ENCODE measurements at regions of chr17 and their contacts with region 1.

Region 1: DNA sequence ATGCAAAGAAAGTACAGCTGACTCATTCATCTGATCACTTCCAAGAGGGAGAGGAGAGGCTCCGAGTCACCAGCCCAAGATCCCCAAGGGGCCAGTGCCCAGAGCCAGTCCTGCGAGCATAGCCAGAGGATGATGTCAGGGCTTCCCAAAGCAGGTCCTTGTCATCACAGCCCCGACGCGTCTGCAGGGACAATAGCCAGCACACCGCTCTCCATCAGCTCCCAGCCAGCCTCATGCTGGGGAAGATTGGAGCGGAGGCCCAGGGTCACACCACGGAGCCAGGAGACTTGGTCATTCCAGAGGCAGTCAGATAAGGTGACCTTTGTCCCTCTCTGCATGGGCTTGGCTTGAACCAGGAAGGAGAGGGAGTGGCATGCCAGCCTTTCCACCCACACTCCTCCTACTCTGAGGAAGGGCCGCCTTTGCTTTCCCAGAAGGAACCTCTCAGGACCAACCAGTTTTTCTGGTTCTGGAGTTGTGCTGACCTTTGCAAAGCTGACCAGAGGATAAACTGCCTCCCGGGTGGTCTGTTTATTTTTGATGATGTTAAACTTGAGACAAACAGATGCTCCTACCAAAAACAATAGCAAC is 58.3 kb upstream of the ARHGAP44 start:
- DNase-seq: peak; percentile 85 to 96 (median 85)
- ATAC-seq: peak; percentile 83 to 87 (median 84)
- H3K4me3 ChIP-seq: peak overlapping the region in 2 of 12 donors; percentile 1 to 10
- H3K27ac ChIP-seq: peak overlapping the region; percentile 37 to 93 (median 82)
- H3K4me1 ChIP-seq: peaks cover 0 to 63% (median 17%) of the 10 kb centered on the region in 12 donors
- H3K27me3 ChIP-seq: no peaks in the 10 kb centered on the region
- CTCF ChIP-seq: no peak
- POLR2A ChIP-seq: no peak

Region 2: DNA sequence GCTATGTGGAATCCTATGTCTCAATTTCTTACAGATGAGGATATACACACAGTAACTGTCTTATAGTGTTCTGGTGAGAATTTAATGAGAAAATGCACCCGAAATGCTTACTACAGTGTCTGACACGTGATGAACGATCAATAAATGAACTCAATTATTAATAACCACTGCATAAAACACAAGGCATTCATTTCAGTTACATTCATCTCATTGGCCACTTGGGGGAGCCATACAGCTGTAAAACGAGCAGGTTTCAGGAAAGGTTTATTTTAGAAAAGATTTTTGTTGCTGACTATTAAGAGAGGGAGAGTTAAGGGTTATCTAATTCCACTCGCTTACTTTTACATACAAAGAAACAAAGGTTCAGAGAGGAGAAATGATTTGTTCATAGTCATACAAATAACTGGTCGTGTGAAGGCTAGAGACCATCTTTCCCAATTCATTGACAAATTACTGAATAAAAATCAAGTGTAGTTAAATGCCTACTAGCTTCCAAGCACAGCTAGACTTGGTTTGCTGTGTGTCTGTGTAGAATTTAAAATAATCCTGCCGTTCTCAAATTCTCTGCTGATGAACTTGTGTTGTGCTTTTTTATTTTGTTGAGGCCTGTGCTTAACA is 550.3 kb before region 1 on chr17:
- intact Hi-C with region 1: loop called in 1 of 10 experiments (anchors 5 kb)
- DNase-seq: peak in 1 of 5 donors; percentile 10
- ATAC-seq: peak in 2 of 4 donors; percentile 42 to 63
- H3K4me3 ChIP-seq: no peak overlapping the region
- H3K27ac ChIP-seq: no peak overlapping the region
- H3K4me1 ChIP-seq: peaks cover 0 to 7% (median 0%) of the 10 kb centered on the region in 12 donors
- H3K27me3 ChIP-seq: no peaks in the 10 kb centered on the region
- CTCF ChIP-seq: peak; percentile 51 to 79 (median 68)
- POLR2A ChIP-seq: no peak

Region 3: DNA sequence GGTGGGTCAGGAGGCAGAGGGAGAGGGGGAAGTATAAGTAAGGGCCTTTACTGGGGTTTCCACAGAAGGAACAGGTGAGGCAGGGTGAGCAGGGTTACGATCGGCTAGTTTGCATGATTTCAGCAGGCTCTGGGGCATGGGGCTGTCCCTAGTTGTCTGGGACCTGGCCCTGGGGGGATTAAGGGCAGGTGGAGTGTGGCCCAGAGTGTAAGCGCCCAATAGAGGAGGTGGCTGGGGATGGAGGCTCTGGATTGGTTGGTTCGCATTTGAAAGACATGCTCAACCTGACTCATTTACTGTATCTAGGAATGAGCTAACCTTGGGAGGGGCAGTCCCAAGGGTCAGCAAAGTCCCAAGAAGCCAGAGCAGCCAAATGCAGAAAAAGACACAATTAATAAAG is 480.1 kb before region 1 on chr17:
- intact Hi-C with region 1: loop called in 3 of 10 experiments (anchors 5 to 10 kb)
- DNase-seq: no peak
- ATAC-seq: no peak
- H3K4me3 ChIP-seq: no peak overlapping the region
- H3K27ac ChIP-seq: no peak overlapping the region
- H3K4me1 ChIP-seq: peaks cover 0 to 11% (median 0%) of the 10 kb centered on the region in 12 donors
- H3K27me3 ChIP-seq: no peaks in the 10 kb centered on the region
- CTCF ChIP-seq: no peak
- POLR2A ChIP-seq: no peak

Region 4: DNA sequence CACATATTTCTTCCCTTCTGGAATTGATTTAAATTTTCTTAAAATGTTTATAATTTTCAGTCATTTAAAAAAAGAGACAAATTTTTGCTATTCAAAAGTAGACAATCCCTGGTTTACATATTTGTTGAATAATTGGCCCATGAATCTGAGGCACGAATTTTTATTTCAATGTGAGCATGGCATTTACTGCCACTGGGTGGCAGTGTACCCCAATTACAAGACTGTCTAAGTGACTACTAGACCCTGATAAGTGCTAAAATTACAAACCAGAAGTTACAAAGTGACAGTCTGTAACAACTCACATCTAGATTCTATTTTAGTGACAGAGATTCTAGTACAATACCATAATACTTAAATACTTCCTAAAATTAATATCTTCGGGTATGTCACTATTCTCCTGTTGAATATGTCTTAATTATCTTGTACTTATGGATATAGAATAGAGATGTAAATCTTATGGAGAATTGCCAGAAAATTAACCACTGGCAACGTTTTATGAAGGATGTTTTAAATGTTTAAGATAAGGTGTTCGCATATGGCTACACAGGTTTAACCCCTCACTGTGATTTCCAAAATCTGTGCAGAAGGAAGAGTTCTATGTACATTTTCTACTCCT is 474.5 kb before region 1 on chr17:
- intact Hi-C with region 1: loop called in 3 of 10 experiments (anchors 5 to 10 kb)
- DNase-seq: peak in 3 of 5 donors; percentile 26 to 43 (median 29)
- ATAC-seq: peak; percentile 54 to 79 (median 72)
- H3K4me3 ChIP-seq: no peak overlapping the region
- H3K27ac ChIP-seq: peak overlapping the region in 1 of 12 donors; percentile 2
- H3K4me1 ChIP-seq: peaks cover 0 to 21% (median 0%) of the 10 kb centered on the region in 12 donors
- H3K27me3 ChIP-seq: no peaks in the 10 kb centered on the region
- CTCF ChIP-seq: peak; percentile 65 to 81 (median 75)
- POLR2A ChIP-seq: no peak

Region 5: GRCh38 chr17:12591021-12591735 is 139.8 kb before region 1 on chr17:
- intact Hi-C with region 1: no loop called
- DNase-seq: no peak
- ATAC-seq: no peak
- H3K4me3 ChIP-seq: no peak overlapping the region
- H3K27ac ChIP-seq: no peak overlapping the region
- H3K4me1 ChIP-seq: no peaks in the 10 kb centered on the region
- H3K27me3 ChIP-seq: no peaks in the 10 kb centered on the region
- CTCF ChIP-seq: no peak
- POLR2A ChIP-seq: no peak

Region 6: DNA sequence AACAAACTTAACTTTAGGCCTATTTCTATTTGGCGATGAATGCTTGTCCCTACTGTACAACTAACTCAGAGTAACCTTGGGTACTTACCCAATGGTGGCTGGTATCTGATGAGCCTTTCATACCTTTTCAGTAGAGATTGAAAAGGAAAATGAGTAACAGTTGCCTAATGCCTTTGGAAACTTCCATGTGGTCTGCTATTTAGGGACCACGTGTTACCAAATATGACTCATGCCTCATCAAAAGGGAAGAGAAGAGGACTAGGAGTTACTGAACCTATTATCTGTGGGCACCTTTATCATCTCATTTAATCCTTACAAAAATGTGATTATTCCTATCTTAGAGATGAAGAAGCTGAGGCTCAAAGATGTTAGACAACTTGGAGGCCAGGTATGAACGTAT is 57.2 kb before region 1 on chr17:
- intact Hi-C with region 1: loop called in 5 of 10 experiments (anchors 2 to 5 kb)
- DNase-seq: no peak
- ATAC-seq: peak in 2 of 4 donors; percentile 43 to 57
- H3K4me3 ChIP-seq: no peak overlapping the region
- H3K27ac ChIP-seq: peak overlapping the region in 2 of 12 donors; percentile 40 to 89
- H3K4me1 ChIP-seq: peaks cover 0 to 44% (median 12%) of the 10 kb centered on the region in 12 donors
- H3K27me3 ChIP-seq: no peaks in the 10 kb centered on the region
- CTCF ChIP-seq: no peak
- POLR2A ChIP-seq: no peak

Region 7: DNA sequence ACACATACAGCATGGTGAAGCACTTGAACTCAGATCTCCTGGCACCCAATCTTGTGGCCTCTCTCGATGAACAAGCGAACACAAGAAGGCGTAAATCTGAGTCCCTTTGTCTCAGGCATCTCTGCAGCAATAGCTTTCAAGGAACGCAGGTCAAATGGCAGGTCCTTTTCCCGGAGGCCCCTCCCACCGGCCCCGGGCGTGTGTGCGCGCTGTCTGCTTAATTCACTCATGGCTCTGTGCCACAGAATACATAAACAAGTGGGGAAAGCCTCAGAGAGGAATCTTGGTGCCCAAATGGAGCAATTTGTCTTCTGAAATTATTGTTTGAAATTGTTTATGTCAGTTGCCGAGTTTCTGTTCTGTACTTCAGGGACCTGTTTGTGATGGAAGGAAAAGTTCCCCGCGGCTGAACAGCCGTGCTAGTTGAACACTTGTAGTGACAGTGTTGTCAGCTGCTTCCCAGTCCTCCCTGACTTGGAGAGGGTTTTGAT is 50.6 kb before region 1 on chr17:
- intact Hi-C with region 1: loop called in 3 of 10 experiments (anchors 2 to 5 kb)
- DNase-seq: no peak
- ATAC-seq: peak; percentile 3 to 56 (median 45)
- H3K4me3 ChIP-seq: peak overlapping the region in 5 of 12 donors; percentile 0 to 20 (median 5)
- H3K27ac ChIP-seq: peak overlapping the region; percentile 24 to 80 (median 65)
- H3K4me1 ChIP-seq: peaks cover 0 to 84% (median 25%) of the 10 kb centered on the region in 12 donors
- H3K27me3 ChIP-seq: no peaks in the 10 kb centered on the region
- CTCF ChIP-seq: no peak
- POLR2A ChIP-seq: no peak

Region 8: DNA sequence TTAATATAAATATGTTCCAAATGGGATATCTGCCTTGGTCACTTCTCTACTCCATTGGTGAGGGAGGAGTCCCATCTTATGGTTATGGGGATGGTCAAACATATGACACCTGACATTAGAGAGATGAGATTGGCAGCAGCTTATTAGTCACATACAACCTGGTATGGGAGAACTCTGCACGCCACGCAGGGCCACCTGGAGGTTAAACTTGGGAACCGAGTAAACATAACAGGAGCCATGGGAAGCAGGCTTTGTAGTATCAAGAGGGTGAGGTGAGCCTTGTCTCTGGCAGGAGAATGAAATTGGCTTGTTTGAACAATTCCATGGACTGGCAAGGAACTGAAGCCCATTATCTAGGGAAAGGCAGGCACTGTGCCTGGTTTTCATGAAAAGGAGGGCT is 525.5 kb after region 1 on chr17:
- intact Hi-C with region 1: no loop called
- DNase-seq: no peak
- ATAC-seq: no peak
- H3K4me3 ChIP-seq: no peak overlapping the region
- H3K27ac ChIP-seq: no peak overlapping the region
- H3K4me1 ChIP-seq: no peaks in the 10 kb centered on the region
- H3K27me3 ChIP-seq: no peaks in the 10 kb centered on the region
- CTCF ChIP-seq: no peak
- POLR2A ChIP-seq: no peak

Measured in heart left ventricle (tissue), 16 donors.